CD8-positive, alpha-beta T cell (primary cell): ENCODE measurements at regions of chr4 and their contacts with region 1.

Region 1: GRCh38 chr4:40165931-40166330 is 30.9 kb upstream of the RHOH start:
- DNase-seq: no peak
- ATAC-seq: no peak
- H3K4me3 ChIP-seq: no peak overlapping the region
- H3K4me3 Mint-ChIP-seq: no peak overlapping the region
- H3K27ac ChIP-seq: no peak overlapping the region
- H3K27ac Mint-ChIP-seq: no peak overlapping the region
- H3K4me1 ChIP-seq: no peaks in the 10 kb centered on the region
- H3K4me1 Mint-ChIP-seq: peaks cover 5% of the 10 kb centered on the region
- H3K27me3 ChIP-seq: no peaks in the 10 kb centered on the region
- H3K27me3 Mint-ChIP-seq: no peaks in the 10 kb centered on the region
- CTCF ChIP-seq: no peak

Region 2: GRCh38 chr4:38620790-38621684 is 1544.9 kb before region 1 on chr4:
- CTCF ChIA-PET with region 1: no interaction called
- POLR2A ChIA-PET with region 1: no interaction called
- intact Hi-C with region 1: no loop called
- DNase-seq: peak in 1 of 9 experiments; percentile 14
- ATAC-seq: no peak
- H3K4me3 ChIP-seq: no peak overlapping the region
- H3K4me3 Mint-ChIP-seq: no peak overlapping the region
- H3K27ac ChIP-seq: no peak overlapping the region
- H3K27ac Mint-ChIP-seq: no peak overlapping the region
- H3K4me1 ChIP-seq: peaks cover 4% of the 10 kb centered on the region
- H3K4me1 Mint-ChIP-seq: peaks cover 13% of the 10 kb centered on the region
- H3K27me3 ChIP-seq: no peaks in the 10 kb centered on the region
- H3K27me3 Mint-ChIP-seq: no peaks in the 10 kb centered on the region
- CTCF ChIP-seq: no peak

Region 3: GRCh38 chr4:40180356-40180755 is 14.4 kb after region 1 on chr4:
- CTCF ChIA-PET with region 1: interaction called, 4 read pairs
- POLR2A ChIA-PET with region 1: interaction called, 4 read pairs
- intact Hi-C with region 1: loop called in 1 of 2 experiments (anchors 2 kb)
- DNase-seq: no peak
- ATAC-seq: no peak
- H3K4me3 ChIP-seq: no peak overlapping the region
- H3K4me3 Mint-ChIP-seq: no peak overlapping the region
- H3K27ac ChIP-seq: no peak overlapping the region
- H3K27ac Mint-ChIP-seq: no peak overlapping the region
- H3K4me1 ChIP-seq: peaks cover 14% of the 10 kb centered on the region
- H3K4me1 Mint-ChIP-seq: peaks cover 31% of the 10 kb centered on the region
- H3K27me3 ChIP-seq: no peaks in the 10 kb centered on the region
- H3K27me3 Mint-ChIP-seq: no peaks in the 10 kb centered on the region
- CTCF ChIP-seq: no peak

Region 4: DNA sequence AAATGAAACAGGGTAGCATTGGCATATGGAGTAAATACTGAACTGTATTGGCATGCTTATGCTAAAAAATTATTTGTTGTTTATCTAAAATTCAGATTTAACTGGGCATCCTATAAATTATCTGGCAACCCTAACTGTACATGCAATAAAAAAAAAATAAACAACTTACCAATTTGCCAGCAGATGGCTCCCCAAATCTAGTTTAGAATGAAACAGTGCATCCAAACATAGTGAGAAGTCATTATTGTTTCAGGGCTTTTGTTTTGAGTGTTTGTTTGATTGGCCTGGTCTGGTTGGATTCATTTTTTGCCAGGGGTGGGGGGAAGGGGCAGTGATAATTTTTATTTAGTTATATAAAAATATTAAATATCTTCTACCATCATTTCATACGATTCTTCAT is 571.0 kb after region 1 on chr4:
- CTCF ChIA-PET with region 1: no interaction called
- POLR2A ChIA-PET with region 1: no interaction called
- intact Hi-C with region 1: no loop called
- DNase-seq: peak in 1 of 9 experiments; percentile 25
- ATAC-seq: no peak
- H3K4me3 ChIP-seq: no peak overlapping the region
- H3K4me3 Mint-ChIP-seq: no peak overlapping the region
- H3K27ac ChIP-seq: no peak overlapping the region
- H3K27ac Mint-ChIP-seq: no peak overlapping the region
- H3K4me1 ChIP-seq: peaks cover 2% of the 10 kb centered on the region
- H3K4me1 Mint-ChIP-seq: peaks cover 2% of the 10 kb centered on the region
- H3K27me3 ChIP-seq: no peaks in the 10 kb centered on the region
- H3K27me3 Mint-ChIP-seq: peaks cover 7% of the 10 kb centered on the region
- CTCF ChIP-seq: no peak